HEK293T (cell line): ENCODE measurements at regions of chr7 and their contacts with region 1.

Region 1: GRCh38 chr7:31633894-31634494 is 53.0 kb upstream of the PPP1R17 start:
- DNase-seq: peak; percentile 63

Region 2: GRCh38 chr7:31134246-31135188 is 499.5 kb before region 1 on chr7:
- CTCF ChIA-PET with region 1: interaction called, 20 read pairs
- POLR2A ChIA-PET with region 1: no interaction called
- DNase-seq: peak; percentile 83

Region 3: GRCh38 chr7:31443457-31443856 is 190.5 kb before region 1 on chr7:
- CTCF ChIA-PET with region 1: interaction called, 10 read pairs
- POLR2A ChIA-PET with region 1: no interaction called
- DNase-seq: peak; percentile 58

Region 4: DNA sequence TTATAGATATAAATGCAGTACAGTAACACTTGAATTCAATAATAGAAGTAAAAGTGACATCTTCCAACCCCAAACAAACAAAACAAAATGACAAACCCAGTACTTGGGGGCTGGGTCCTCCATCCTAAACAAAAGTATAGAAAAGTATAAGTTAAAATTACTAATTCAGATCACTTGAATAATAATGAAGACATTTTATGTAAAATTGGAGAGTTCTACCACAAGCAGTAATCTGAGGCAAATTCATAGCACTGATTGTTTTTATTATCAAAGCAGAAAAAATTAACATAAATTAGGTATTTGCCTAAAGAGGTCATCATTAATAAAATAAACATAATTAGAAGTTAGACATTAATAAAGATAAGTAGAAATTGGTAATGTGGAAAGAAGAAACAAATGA is 38.6 kb before region 1 on chr7:
- CTCF ChIA-PET with region 1: no interaction called
- POLR2A ChIA-PET with region 1: no interaction called
- DNase-seq: no peak